PC-3 (cell line): ENCODE measurements at regions of chr16 and their contacts with region 1.

Region 1: DNA sequence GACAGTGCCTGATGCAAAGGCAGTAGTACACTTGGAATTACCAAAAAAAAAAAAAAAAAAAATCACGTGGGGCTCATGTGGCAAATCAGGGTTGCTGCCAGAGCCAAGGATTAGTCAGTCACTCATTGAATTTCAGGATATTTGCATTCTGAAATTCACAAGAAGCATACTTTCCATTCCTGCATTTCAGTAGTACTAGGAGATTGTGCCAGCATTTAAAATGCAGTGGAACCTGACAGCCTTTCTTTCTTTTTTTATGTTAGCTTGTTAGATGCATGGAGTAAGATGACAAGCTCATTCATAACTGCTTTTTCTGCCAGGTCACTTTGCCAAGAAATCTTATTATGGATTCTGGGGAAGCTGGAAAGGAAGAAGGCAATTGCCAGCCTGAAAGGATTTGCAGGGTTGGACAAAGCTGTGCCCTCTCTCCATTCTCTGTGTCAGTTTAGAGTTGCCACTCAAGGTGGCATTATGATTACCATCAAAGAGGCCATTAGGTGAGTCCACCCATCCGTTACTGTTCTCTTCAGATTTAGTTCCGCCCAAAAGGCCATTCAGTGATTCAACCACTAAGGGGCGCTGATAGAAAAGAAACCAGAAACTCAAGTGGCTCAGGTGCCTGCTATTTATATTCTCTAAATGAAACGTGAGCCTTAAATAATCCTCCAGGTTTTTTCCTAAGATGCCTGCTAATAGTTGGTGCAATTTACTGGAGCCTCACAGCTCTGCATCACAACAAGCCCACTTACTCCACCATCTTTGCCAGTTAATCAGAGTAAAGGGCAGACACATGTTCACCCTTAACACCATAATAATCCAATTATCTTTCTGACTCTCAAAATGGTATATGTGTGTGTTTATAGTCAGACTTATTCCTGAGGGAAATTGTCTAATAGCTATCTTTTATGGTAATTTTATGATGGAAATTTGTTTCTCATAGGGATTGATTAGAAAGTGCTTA is 59.0 kb downstream of the TANGO6 start:
- DNase-seq: peak; percentile 80
- ATAC-seq: peak; percentile 91
- H3K4me3 ChIP-seq: no peak overlapping the region
- H3K27ac ChIP-seq: peak overlapping the region; percentile 32
- H3K4me1 ChIP-seq: peaks cover 14% of the 10 kb centered on the region
- H3K27me3 ChIP-seq: no peaks in the 10 kb centered on the region
- CTCF ChIP-seq: peak; percentile 87

Region 2: DNA sequence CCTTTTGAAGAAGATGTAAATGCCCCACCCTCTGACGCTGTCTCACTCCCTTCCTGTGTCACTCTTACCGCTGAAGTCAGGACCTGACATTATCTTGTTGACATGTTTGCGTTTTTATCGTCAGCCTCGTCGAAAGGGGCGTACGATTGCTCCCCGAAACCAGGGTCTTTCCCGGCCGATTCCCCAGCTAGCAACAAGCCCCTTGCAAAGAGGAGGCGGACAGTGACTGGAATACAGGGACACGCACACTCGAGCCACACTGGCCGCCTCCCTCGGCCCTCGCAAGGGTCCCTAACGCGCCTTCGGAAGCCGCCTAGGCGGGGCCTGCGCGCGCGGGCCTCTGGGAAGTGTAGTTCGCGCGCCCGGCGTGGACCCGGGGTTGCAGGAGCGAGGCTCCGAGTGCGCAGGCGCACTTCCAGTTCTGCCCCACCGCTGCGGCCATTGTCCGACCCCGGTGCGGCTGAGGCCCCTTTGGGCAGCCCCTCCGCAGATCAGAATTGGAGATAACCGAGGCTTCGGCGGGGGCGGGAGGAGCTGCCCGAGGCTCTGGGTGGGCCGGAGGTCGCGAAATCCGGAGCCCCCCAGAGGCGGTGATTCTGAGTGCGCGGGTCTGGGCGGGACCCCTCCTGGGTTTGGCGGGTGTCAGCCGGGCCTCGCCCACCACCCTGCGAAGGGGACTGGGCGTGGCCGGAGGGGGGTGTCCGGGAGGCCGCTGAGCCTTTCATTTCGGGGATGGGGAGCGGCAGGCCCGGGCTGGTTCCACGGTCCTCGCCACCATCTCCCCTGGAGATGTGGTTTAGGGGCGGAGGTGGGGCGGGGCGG is 363.2 kb before region 1 on chr16 and contains the start of gene ZFP90:
- CTCF ChIA-PET with region 1: no interaction called
- POLR2A ChIA-PET with region 1: no interaction called
- intact Hi-C with region 1: no loop called
- DNase-seq: peak; percentile 79
- ATAC-seq: peak; percentile 98
- H3K4me3 ChIP-seq: peak within 1 kb of the TSS; percentile 87
- H3K27ac ChIP-seq: no peak within 1 kb of the TSS
- H3K4me1 ChIP-seq: no peaks in the 10 kb centered on the region
- H3K27me3 ChIP-seq: no peaks in the 10 kb centered on the region
- CTCF ChIP-seq: no peak
- total RNA-seq, gene ZFP90: 13.1 and 18.9 TPM in 2 replicates

Region 3: GRCh38 chr16:68951991-68952877 is 49.9 kb after region 1 on chr16:
- CTCF ChIA-PET with region 1: no interaction called
- POLR2A ChIA-PET with region 1: no interaction called
- intact Hi-C with region 1: loop called (anchors 1 kb)
- DNase-seq: peak; percentile 57
- ATAC-seq: peak; percentile 87
- H3K4me3 ChIP-seq: no peak overlapping the region
- H3K27ac ChIP-seq: peak overlapping the region; percentile 80
- H3K4me1 ChIP-seq: peaks cover 12% of the 10 kb centered on the region
- H3K27me3 ChIP-seq: no peaks in the 10 kb centered on the region
- CTCF ChIP-seq: no peak

Region 4: GRCh38 chr16:68995011-68995504 is 92.8 kb after region 1 on chr16:
- CTCF ChIA-PET with region 1: no interaction called
- POLR2A ChIA-PET with region 1: no interaction called
- intact Hi-C with region 1: loop called (anchors 10 kb)
- DNase-seq: peak; percentile 70
- ATAC-seq: peak; percentile 20; the same call in 1 of the 2 replicates
- H3K4me3 ChIP-seq: no peak overlapping the region
- H3K27ac ChIP-seq: peak overlapping the region; percentile 96
- H3K4me1 ChIP-seq: peaks cover 41% of the 10 kb centered on the region
- H3K27me3 ChIP-seq: no peaks in the 10 kb centered on the region
- CTCF ChIP-seq: peak; percentile 58

Region 5: DNA sequence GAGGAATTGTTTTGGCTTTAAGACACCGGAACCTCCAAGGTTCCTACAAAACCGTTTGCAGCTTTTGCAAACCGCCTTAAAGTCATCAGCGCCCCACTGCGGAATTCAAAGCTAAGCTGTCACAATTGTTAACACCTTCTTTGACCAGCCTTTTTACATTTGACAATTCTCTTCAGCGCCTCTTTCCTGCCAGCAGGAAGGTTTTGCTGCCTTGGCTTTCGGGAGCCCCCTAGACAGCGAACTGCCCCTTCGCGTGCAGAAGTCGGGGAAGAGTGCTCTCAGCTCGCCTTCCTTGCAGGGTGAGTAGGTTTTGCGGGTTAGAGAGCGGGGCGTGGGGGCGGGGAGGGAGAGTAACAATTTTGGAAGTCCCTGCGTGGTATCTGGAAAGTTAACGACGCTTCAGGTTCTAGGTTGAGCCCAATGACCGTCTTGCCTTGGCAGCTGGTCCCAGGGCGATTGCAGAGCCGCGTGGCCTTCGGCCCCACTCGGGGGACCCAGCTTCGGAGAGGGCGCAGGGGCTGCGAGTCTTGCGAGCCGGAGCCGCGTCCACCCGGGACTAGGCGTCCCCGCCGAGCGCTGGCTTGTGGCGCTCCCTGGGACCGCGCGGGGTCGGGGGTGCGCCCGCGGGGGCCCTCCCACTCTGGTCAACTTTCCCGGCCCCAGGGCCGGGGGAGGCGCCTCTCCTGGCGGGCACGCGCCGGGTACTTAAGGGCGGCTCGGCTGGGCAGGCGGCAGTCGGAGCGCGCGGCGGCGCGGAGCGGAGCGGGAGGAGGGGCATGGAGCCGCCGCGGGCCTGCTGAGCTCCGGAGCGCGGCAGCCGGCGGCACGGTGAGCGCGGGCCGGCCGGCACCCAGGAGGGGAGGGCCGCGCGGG is 203.4 kb after region 1 on chr16 and contains the start of gene HAS3:
- CTCF ChIA-PET with region 1: interaction called, 3 read pairs
- POLR2A ChIA-PET with region 1: no interaction called
- intact Hi-C with region 1: loop called (anchors 1 kb)
- DNase-seq: peak; percentile 75
- ATAC-seq: peak; percentile 67
- H3K4me3 ChIP-seq: peak within 1 kb of the TSS; percentile 98
- H3K27ac ChIP-seq: peak within 1 kb of the TSS; percentile 83
- H3K4me1 ChIP-seq: peaks cover 33% of the 10 kb centered on the region
- H3K27me3 ChIP-seq: no peaks in the 10 kb centered on the region
- CTCF ChIP-seq: peak; percentile 62
- total RNA-seq, gene HAS3: 92.5 and 153 TPM in 2 replicates

Region 6: GRCh38 chr16:69123910-69124309 is 221.6 kb after region 1 on chr16:
- CTCF ChIA-PET with region 1: interaction called, 6 read pairs
- POLR2A ChIA-PET with region 1: no interaction called
- intact Hi-C with region 1: loop called (anchors 1 kb)
- DNase-seq: peak; percentile 73
- ATAC-seq: peak; percentile 14; the same call in 1 of the 2 replicates
- H3K4me3 ChIP-seq: no peak overlapping the region
- H3K27ac ChIP-seq: no peak overlapping the region
- H3K4me1 ChIP-seq: no peaks in the 10 kb centered on the region
- H3K27me3 ChIP-seq: no peaks in the 10 kb centered on the region
- CTCF ChIP-seq: peak; percentile 72